ENCODE measurements at regions of chr11 and their contacts with region 1.

Region 1: DNA sequence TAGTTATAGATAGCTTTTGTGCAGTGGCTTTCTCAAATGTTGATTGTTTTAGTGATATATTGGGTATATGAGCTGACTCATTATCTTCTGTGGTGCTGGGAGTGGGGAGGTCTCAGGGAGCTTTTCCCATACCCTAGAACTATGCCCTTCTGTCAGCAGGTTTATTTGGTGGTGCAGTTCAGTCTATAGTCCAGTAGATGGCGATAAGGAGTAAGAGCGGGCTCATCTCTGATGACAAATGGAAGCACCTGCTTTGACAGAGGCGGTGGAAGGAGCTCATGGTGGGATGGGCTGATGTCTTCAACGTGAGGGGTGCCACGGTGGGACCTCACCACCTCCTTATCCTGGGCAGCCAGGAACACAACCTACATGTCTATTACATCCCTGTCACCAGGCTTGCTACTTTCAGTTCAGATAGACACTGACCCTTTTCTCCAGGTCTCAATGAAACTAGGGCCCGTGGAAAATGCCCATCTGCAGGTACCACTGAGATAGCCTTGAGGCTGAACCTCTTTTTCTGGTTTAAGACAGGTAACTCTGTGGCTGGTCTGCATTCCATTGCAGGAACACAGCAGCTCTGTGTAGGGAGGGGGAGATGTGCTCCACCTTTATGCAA is 13.0 kb upstream of the OR6A2 start:
- DNase-seq: peak; percentile 35 to 43
- ATAC-seq: peak; percentile 43 to 84; a peak in 4 of 6 replicates
- H3K4me3 ChIP-seq: no peak overlapping the region
- H3K27ac ChIP-seq: no peak overlapping the region
- H3K4me1 ChIP-seq: no peaks in the 10 kb centered on the region
- CTCF ChIP-seq: peak; percentile 45
- EP300 ChIP-seq: no peak
- POLR2A ChIP-seq: no peak
- RAD21 ChIP-seq: peak in 1 of 2 experiments; percentile 50; a peak in 2 of 5 replicates

Region 2: DNA sequence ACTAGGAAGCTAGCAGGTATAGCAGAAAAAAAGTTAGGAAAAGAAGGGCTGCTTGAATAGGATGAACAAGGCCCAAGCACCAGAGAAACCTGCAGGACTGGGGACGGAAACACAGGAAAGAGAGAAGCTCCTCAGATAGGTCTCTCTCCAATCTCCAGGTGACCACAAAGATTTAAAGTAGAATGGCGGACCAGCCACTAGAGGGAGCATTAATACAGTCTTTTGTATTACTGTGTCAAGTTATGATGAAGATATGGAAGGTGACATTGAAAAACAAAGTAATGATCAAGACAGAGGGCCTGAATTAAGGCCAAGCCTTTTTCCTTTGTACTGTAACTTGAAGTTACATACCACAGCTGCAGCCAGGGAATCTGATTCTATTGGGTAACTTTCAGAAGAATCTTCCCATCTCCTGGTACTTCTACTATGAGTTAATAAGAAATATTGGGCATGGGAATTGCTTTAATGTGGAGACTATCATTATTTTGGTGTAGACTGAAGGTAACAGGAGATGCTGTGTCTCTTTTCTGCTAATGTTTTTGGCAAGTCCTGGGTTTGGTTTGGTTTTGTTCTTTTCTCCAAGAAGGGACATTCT is 74.5 kb before region 1 on chr11:
- CTCF ChIA-PET with region 1: no interaction called
- POLR2A ChIA-PET with region 1: no interaction called
- DNase-seq: peak; percentile 36 to 45
- ATAC-seq: peak; percentile 84 to 93
- H3K4me3 ChIP-seq: no peak overlapping the region
- H3K27ac ChIP-seq: no peak overlapping the region
- H3K4me1 ChIP-seq: no peaks in the 10 kb centered on the region
- CTCF ChIP-seq: peak; percentile 61
- EP300 ChIP-seq: no peak
- POLR2A ChIP-seq: no peak
- RAD21 ChIP-seq: peak; percentile 29 to 39; a peak in 3 of 5 replicates

Region 3: DNA sequence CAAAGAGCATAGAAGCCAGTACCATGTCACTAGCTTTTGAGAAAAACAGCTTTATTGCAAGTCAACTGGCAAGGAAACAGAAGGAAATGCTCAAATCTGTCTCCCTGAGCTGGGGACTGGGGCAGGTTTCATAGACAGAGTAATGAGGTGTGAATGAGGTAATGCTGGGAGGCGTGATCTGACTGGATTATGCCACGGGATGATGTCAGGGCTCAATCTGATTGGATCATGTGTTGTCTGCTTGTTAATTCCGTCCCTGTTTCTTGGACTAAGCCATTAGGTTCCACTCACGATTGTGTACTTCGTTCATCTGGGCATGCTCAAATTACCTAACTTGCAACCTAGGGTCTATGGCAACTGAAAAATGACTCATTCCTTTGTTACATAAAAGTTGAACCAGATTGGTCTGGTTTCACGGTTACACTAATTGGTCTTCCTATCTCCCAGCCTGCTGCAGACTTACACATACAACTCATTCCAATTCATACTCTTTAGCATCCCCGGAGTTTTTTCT is 12.8 kb after region 1 on chr11:
- CTCF ChIA-PET with region 1: interaction called, 23 read pairs
- POLR2A ChIA-PET with region 1: no interaction called
- DNase-seq: no peak
- ATAC-seq: 0 out of 6 replicates have a peak, but pooled peaks of 1 of the 2 experiments have one; percentile 19
- H3K4me3 ChIP-seq: no peak overlapping the region
- H3K27ac ChIP-seq: no peak overlapping the region
- H3K4me1 ChIP-seq: no peaks in the 10 kb centered on the region
- CTCF ChIP-seq: no peak
- EP300 ChIP-seq: no peak
- POLR2A ChIP-seq: no peak
- RAD21 ChIP-seq: no peak

Measured in A549 (cell line).